Activated CD4-positive, alpha-beta T cell treated with anti-CD3 and anti-CD28 coated beads for 36 hours (primary cell): ENCODE measurements at regions of chr10 and their contacts with region 1.

Region 1: GRCh38 chr10:100267237-100268104 is at the start of gene CWF19L1:
- DNase-seq: peak; percentile 86
- ATAC-seq: peak; percentile 92
- H3K4me3 Mint-ChIP-seq: peak within 1 kb of the TSS; percentile 97
- H3K27ac Mint-ChIP-seq: peak within 1 kb of the TSS; percentile 99
- H3K4me1 Mint-ChIP-seq: peaks cover 22% of the 10 kb centered on the region
- H3K27me3 Mint-ChIP-seq: no peaks in the 10 kb centered on the region
- total RNA-seq, gene CWF19L1: 43.4 to 47.5 TPM

Region 2: DNA sequence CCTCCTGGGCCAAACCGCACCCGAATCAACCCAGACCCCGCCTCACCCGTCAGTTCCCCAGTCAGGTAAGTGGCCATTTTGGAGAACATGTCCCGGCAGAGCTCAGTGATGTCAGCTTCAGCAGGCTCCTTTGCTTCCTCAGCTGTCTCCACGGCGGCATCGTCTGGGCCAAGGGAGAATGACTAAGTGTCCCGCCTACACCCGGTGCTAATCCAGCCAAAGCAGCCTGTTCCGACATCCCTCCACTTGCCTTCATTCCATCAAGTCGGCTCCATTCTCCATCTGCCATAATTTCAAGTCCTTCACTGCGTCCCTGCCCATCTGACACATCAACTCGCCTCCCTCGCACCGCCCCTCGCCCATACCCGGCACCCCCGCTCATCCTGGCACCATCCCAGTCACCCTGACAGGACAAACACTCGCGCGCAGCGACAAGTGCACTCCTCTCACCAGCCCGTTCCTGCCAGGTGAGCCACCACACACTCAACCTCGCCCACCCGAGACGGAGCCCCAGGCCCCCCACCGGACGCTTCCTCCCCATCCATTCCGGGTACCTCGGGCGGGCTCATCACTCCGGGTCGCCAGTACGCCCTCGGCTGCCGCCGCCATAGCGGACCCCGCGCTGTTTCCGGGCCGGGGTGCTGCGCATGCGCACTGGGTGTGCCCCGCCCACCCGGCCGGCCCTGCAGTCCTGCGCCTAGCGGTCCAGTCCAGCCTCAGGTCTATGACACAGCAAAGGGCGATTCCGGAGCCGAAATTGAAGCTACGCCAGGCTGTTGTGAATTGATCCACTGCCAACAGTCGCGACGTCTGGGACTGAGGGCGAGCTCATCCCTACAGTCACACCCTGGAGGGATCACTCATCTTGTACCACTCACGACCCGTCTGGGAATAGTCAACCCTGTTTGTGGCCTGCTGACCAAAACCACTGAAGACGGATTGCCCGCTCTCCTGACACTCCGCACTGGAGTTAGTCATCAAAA is 18.9 kb after region 1 on chr10 and contains the start of gene BLOC1S2:
- CTCF ChIA-PET with region 1: interaction called, 3 read pairs
- POLR2A ChIA-PET with region 1: interaction called, 5 read pairs
- intact Hi-C with region 1: loop called (anchors 1 to 2 kb)
- DNase-seq: peak; percentile 91
- ATAC-seq: peak; percentile 89
- H3K4me3 Mint-ChIP-seq: peak within 1 kb of the TSS; percentile 100
- H3K27ac Mint-ChIP-seq: peak within 1 kb of the TSS; percentile 100
- H3K4me1 Mint-ChIP-seq: peaks cover 24% of the 10 kb centered on the region
- H3K27me3 Mint-ChIP-seq: no peaks in the 10 kb centered on the region
- total RNA-seq, gene BLOC1S2: 45.0 to 45.7 TPM